CD4-positive, alpha-beta T cell (primary cell): ENCODE measurements at regions of chr3 and their contacts with region 1.

Region 1: GRCh38 chr3:44976002-44976815 is at the starts of genes EXOSC7 and ZDHHC3:
- DNase-seq: peak; percentile 77 to 97 (median 84)
- ATAC-seq: peak; percentile 95
- H3K4me3 ChIP-seq: peak within 1 kb of the TSS; percentile 95
- H3K4me3 Mint-ChIP-seq: peak within 1 kb of the TSS; percentile 98
- H3K27ac ChIP-seq: peak within 1 kb of the TSS; percentile 70 to 89
- H3K27ac Mint-ChIP-seq: peak within 1 kb of the TSS; percentile 94
- H3K4me1 ChIP-seq: peaks cover 48% of the 10 kb centered on the region
- H3K4me1 Mint-ChIP-seq: peaks cover 73% of the 10 kb centered on the region
- H3K27me3 ChIP-seq: no peaks in the 10 kb centered on the region
- H3K27me3 Mint-ChIP-seq: no peaks in the 10 kb centered on the region
- CTCF ChIP-seq: no peak
- total RNA-seq, gene EXOSC7: 28.1 to 28.4 TPM
- total RNA-seq, gene ZDHHC3: 34.4 to 34.6 TPM

Region 2: DNA sequence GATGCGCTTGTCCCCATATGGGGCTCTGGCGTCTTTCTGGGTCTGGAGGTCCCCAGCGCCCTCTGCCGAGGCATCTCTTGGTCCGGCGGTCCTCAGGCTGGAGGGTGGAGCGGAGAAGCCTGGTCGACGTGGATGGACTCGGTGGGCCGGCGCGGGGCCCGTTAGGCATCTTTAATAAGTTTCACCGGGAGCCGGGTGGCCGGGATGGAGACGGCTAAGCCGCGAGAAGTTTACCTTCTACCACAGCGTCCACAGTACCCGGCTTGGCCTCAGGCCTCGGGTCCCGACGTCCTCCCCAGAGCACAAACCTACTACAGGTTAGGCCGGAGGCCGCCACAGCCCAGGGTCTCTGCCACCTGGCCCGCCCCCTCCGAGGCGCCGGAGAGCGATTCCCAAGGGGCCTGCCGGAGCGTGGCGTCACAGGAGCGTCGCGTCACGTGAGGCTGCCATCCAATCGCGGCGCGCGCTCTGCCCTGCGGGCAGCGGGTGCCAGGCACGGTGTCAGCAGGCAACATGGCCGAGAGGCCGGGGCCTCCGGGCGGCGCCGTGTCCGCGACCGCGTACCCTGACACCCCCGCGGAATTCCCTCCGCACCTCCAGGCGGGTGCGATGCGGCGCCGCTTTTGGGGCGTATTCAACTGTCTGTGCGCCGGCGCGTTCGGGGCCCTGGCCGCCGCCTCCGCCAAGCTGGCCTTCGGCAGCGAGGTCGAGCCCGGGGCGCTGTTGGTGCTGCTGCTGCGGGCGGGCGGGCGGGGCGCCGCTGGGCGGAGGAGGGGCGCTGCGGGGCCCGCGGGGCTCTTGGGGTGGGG is 114.6 kb before region 1 on chr3 and contains the start of gene TMEM42:
- CTCF ChIA-PET with region 1: no interaction called
- POLR2A ChIA-PET with region 1: interaction called, 3 read pairs
- intact Hi-C with region 1: loop called in 1 of 2 experiments (anchors 5 kb)
- DNase-seq: peak; percentile 72 to 95 (median 82)
- ATAC-seq: peak; percentile 91
- H3K4me3 ChIP-seq: peak within 1 kb of the TSS; percentile 76
- H3K4me3 Mint-ChIP-seq: peak within 1 kb of the TSS; percentile 91
- H3K27ac ChIP-seq: peak within 1 kb of the TSS; percentile 72 to 80
- H3K27ac Mint-ChIP-seq: peak within 1 kb of the TSS; percentile 88
- H3K4me1 ChIP-seq: peaks cover 42% of the 10 kb centered on the region
- H3K4me1 Mint-ChIP-seq: peaks cover 48% of the 10 kb centered on the region
- H3K27me3 ChIP-seq: no peaks in the 10 kb centered on the region
- H3K27me3 Mint-ChIP-seq: no peaks in the 10 kb centered on the region
- CTCF ChIP-seq: no peak
- total RNA-seq, gene TMEM42: 6.8 to 8.0 TPM

Region 3: GRCh38 chr3:44926172-44926571 is 50.0 kb before region 1 on chr3:
- CTCF ChIA-PET with region 1: no interaction called
- POLR2A ChIA-PET with region 1: no interaction called
- intact Hi-C with region 1: no loop called
- DNase-seq: no peak
- ATAC-seq: no peak
- H3K4me3 ChIP-seq: no peak overlapping the region
- H3K4me3 Mint-ChIP-seq: no peak overlapping the region
- H3K27ac ChIP-seq: no peak overlapping the region
- H3K27ac Mint-ChIP-seq: no peak overlapping the region
- H3K4me1 ChIP-seq: no peaks in the 10 kb centered on the region
- H3K4me1 Mint-ChIP-seq: no peaks in the 10 kb centered on the region
- H3K27me3 ChIP-seq: no peaks in the 10 kb centered on the region
- H3K27me3 Mint-ChIP-seq: no peaks in the 10 kb centered on the region
- CTCF ChIP-seq: no peak

Region 4: DNA sequence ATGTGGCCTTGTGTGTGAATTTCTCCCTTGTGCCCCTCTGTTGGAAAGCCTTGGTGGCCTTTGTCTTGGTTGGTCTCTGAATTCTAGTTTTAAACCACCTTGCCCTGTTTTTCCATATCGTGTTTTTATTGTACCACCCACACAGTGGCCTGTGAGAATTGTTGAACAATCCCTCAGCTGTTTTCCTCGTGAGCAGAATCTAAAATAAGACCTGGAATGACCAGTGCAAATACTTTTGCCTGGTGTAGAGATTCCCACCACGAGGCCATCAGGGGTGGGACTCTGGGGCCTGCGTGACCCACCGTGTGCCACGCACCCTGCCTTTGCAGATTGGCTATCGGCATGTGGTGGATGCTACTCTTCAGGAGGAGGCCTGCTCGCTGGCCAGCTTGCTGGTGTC is 30.9 kb after region 1 on chr3:
- CTCF ChIA-PET with region 1: no interaction called
- POLR2A ChIA-PET with region 1: interaction called, 18 read pairs
- intact Hi-C with region 1: no loop called
- DNase-seq: no peak
- ATAC-seq: no peak
- H3K4me3 ChIP-seq: no peak overlapping the region
- H3K4me3 Mint-ChIP-seq: no peak overlapping the region
- H3K27ac ChIP-seq: peak overlapping the region in 1 of 2 donors; percentile 55
- H3K27ac Mint-ChIP-seq: peak overlapping the region; percentile 44
- H3K4me1 ChIP-seq: peaks cover 54% of the 10 kb centered on the region
- H3K4me1 Mint-ChIP-seq: peaks cover 52% of the 10 kb centered on the region
- H3K27me3 ChIP-seq: peaks cover 0 to 2% of the 10 kb centered on the region in 2 experiments
- H3K27me3 Mint-ChIP-seq: no peaks in the 10 kb centered on the region
- CTCF ChIP-seq: no peak